ENCODE measurements at regions of chr22 and their contacts with region 1.

Region 1: GRCh38 chr22:23128269-23129108 is 13.3 kb downstream of the RSPH14 start:
- DNase-seq: peak; percentile 84
- ATAC-seq: peak; percentile 92
- H3K4me3 Mint-ChIP-seq: no peak overlapping the region
- H3K27ac Mint-ChIP-seq: no peak overlapping the region
- H3K4me1 Mint-ChIP-seq: no peaks in the 10 kb centered on the region
- H3K27me3 Mint-ChIP-seq: no peaks in the 10 kb centered on the region

Region 2: GRCh38 chr22:22976033-22976922 is 152.2 kb before region 1 on chr22:
- CTCF ChIA-PET with region 1: interaction called, 10 read pairs
- POLR2A ChIA-PET with region 1: no interaction called
- intact Hi-C with region 1: no loop called
- DNase-seq: no peak
- ATAC-seq: no peak
- H3K4me3 Mint-ChIP-seq: no peak overlapping the region
- H3K27ac Mint-ChIP-seq: no peak overlapping the region
- H3K4me1 Mint-ChIP-seq: no peaks in the 10 kb centered on the region
- H3K27me3 Mint-ChIP-seq: peaks cover 15% of the 10 kb centered on the region

Region 3: DNA sequence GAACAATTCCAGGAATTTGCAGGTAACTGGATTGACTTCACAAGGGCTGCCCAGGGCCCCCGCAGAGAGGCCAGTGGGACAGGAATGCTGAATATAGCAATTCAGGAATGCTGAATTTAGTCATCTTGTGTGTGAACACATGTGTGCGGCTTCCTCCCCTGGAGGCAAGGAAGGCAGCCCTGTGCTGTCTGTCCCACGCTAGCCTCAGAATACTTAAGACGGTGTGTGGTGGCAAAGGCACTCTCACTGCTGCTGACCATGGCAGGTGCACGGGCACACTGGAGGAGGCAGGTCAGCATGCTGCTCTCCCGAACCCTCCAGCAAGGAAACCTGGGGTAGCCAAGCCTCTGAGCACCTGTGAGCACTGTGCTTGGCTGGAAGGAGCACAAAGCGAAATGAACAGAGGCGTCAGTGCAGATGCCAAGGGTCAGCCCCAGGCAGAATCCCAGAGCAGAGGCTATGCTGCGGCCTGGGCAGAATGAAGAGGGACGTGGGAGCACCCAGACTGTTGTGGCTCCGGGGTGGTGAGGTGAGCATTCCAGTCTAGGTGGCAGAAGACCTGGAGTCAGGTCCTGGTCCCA is 55.5 kb before region 1 on chr22:
- CTCF ChIA-PET with region 1: no interaction called
- POLR2A ChIA-PET with region 1: no interaction called
- intact Hi-C with region 1: no loop called
- DNase-seq: no peak
- ATAC-seq: no peak
- H3K4me3 Mint-ChIP-seq: no peak overlapping the region
- H3K27ac Mint-ChIP-seq: no peak overlapping the region
- H3K4me1 Mint-ChIP-seq: peaks cover 8% of the 10 kb centered on the region
- H3K27me3 Mint-ChIP-seq: peaks cover 14% of the 10 kb centered on the region

Region 4: GRCh38 chr22:23163665-23164064 is 35.2 kb after region 1 on chr22:
- CTCF ChIA-PET with region 1: no interaction called
- POLR2A ChIA-PET with region 1: no interaction called
- intact Hi-C with region 1: no loop called
- DNase-seq: no peak
- ATAC-seq: no peak
- H3K4me3 Mint-ChIP-seq: no peak overlapping the region
- H3K27ac Mint-ChIP-seq: no peak overlapping the region
- H3K4me1 Mint-ChIP-seq: no peaks in the 10 kb centered on the region
- H3K27me3 Mint-ChIP-seq: no peaks in the 10 kb centered on the region